Activated naive CD4-positive, alpha-beta T cell treated with anti-CD3 and anti-CD28 coated beads for 36 hours (primary cell): ENCODE measurements at regions of chr18 and their contacts with region 1.

Region 1: DNA sequence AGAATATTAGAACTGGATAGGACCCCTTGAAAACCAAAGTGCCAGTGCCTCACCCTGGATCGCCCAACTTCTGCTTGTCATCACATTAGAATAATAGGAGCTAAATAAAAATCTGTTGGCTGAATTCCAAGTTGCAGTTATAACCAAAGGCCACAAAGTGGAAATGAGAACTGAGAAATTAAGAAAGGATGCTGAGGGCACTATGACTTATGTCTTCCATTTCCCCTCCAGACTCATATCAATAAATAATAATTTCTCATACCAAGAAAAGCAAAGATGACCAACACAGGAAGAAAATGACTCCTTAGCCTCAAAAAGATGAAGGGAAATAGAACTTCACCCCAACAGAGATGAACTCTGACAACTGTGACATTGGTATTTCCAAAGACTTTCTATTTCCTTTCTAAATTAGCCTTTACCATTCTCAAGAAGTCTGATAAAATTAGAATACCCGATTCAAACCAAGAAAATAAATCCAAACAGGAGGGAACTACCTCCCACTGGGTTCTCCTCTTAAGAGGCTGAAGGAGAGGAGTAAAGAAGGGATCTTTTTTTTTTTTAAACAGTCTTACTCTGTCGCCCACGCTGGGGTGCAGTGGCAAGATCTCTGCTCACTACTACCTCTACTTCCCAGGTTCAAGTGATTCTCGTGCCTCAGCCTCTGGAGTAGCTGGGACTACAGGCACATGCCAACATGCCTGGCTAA is 46.5 kb upstream of the EPG5 start:
- DNase-seq: no peak
- H3K4me3 Mint-ChIP-seq: no peak overlapping the region
- H3K27ac Mint-ChIP-seq: no peak overlapping the region
- H3K4me1 Mint-ChIP-seq: peaks cover 13% of the 10 kb centered on the region
- H3K27me3 Mint-ChIP-seq: no peaks in the 10 kb centered on the region

Region 2: DNA sequence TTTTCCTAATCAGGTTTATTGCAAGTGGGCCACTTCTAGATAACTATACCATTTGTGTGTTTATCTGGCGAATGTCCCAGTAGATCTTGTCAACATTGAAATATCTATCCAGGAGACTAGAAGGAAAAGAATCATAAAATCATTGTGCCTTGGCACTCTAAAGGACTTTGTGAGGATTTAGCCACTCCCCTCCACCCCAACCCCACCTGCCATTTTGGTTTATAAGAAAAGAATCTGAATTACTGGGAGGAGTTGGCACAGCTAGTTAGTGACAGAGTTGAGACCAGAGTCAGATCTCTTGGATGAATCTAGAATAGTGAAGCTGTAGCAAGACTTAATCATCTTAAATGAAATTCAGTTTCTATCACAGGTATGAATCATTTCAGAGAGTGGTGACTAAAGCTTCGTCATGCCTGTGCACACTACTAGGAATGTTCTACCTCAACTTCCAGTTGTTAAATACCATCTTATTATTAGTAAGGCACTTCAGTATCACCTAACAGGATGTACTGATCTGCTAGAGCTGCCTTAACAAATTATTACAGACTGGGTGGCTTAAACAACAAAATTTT is 611.1 kb before region 1 on chr18:
- CTCF ChIA-PET with region 1: no interaction called
- intact Hi-C with region 1: loop called (anchors 5 kb)
- DNase-seq: no peak
- H3K4me3 Mint-ChIP-seq: no peak overlapping the region
- H3K27ac Mint-ChIP-seq: no peak overlapping the region
- H3K4me1 Mint-ChIP-seq: no peaks in the 10 kb centered on the region
- H3K27me3 Mint-ChIP-seq: peaks cover 13% of the 10 kb centered on the region

Region 3: DNA sequence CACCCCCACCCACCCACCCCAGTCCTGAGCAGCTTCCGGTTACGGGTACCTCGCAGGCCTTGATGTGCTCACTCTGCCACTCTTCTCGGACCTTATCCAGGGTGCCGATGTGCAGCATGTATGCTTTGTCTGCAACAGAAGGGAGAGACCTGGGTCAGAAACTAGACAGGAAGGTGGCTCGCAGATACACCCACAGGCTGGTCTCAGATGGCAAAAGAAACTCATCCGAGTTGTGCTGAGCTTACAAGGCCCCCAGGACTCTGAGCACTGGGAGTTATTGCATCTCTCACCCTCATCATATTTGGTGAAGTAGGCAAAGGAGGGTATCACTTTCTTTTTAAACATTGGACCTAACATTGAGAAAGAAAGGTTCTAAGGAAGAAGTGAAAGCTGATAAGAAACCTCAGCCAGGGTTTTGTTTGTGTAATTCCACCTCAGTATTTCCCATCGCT is 15.9 kb before region 1 on chr18:
- CTCF ChIA-PET with region 1: interaction called, 3 read pairs
- intact Hi-C with region 1: loop called (anchors 1 kb)
- DNase-seq: peak; percentile 45
- H3K4me3 Mint-ChIP-seq: peak overlapping the region; percentile 73
- H3K27ac Mint-ChIP-seq: peak overlapping the region; percentile 88
- H3K4me1 Mint-ChIP-seq: peaks cover 39% of the 10 kb centered on the region
- H3K27me3 Mint-ChIP-seq: no peaks in the 10 kb centered on the region